ENCODE measurements at regions of chr11 and their contacts with region 1.

Region 1: GRCh38 chr11:116879800-116880625 is 42.6 kb upstream of the APOA1 start:
- DNase-seq: peak in 7 of 9 donors; percentile 31 to 54 (median 39)
- ATAC-seq: peak; percentile 84
- H3K4me3 ChIP-seq: no peak overlapping the region
- H3K4me3 Mint-ChIP-seq: no peak overlapping the region
- H3K27ac ChIP-seq: no peak overlapping the region
- H3K27ac Mint-ChIP-seq: peak overlapping the region in 4 of 9 donors; percentile 23 to 67 (median 46)
- H3K4me1 ChIP-seq: no peaks in the 10 kb centered on the region
- H3K4me1 Mint-ChIP-seq: peaks cover 0 to 18% (median 9%) of the 10 kb centered on the region in 7 donors
- H3K27me3 ChIP-seq: no peaks in the 10 kb centered on the region
- H3K27me3 Mint-ChIP-seq: no peaks in the 10 kb centered on the region

Region 2: GRCh38 chr11:116895048-116895757 is 15.2 kb after region 1 on chr11:
- CTCF ChIA-PET with region 1: interaction called, 10 read pairs
- POLR2A ChIA-PET with region 1: no interaction called
- intact Hi-C with region 1: no loop called
- DNase-seq: peak in 4 of 9 donors; percentile 6 to 26 (median 14)
- ATAC-seq: peak; percentile 64
- H3K4me3 ChIP-seq: no peak overlapping the region
- H3K4me3 Mint-ChIP-seq: no peak overlapping the region
- H3K27ac ChIP-seq: no peak overlapping the region
- H3K27ac Mint-ChIP-seq: peak overlapping the region in 6 of 9 donors; percentile 41 to 84 (median 60)
- H3K4me1 ChIP-seq: peaks cover 5 to 8% of the 10 kb centered on the region in 2 donors
- H3K4me1 Mint-ChIP-seq: peaks cover 11 to 28% (median 17%) of the 10 kb centered on the region in 7 donors
- H3K27me3 ChIP-seq: no peaks in the 10 kb centered on the region
- H3K27me3 Mint-ChIP-seq: no peaks in the 10 kb centered on the region

Measured in naive thymus-derived CD4-positive, alpha-beta T cell (primary cell).